ENCODE measurements at regions of chr6 and their contacts with region 1.

Region 1: GRCh38 chr6:157527471-157527907 is 146.5 kb downstream of the ZDHHC14 start:
- DNase-seq: peak; percentile 48
- ATAC-seq: peak; percentile 93
- H3K4me3 ChIP-seq: no peak overlapping the region
- H3K27ac ChIP-seq: no peak overlapping the region
- H3K4me1 ChIP-seq: no peaks in the 10 kb centered on the region
- H3K27me3 ChIP-seq: no peaks in the 10 kb centered on the region
- CTCF ChIP-seq: peak in 1 of 3 experiments; percentile 23; a peak in 1 of 6 replicates
- EP300 ChIP-seq: peak; percentile 49 to 67; a peak in 3 of 4 replicates
- POLR2A ChIP-seq: no peak
- RAD21 ChIP-seq: no peak

Region 2: GRCh38 chr6:157514659-157515496 is 12.6 kb before region 1 on chr6:
- CTCF ChIA-PET with region 1: no interaction called
- POLR2A ChIA-PET with region 1: interaction called, 4 read pairs
- RAD21 ChIA-PET with region 1: no interaction called
- SMC1A ChIA-PET with region 1: interaction called, 12 read pairs
- in situ Hi-C with region 1: no loop called
- intact Hi-C with region 1: no loop called
- DNase-seq: no peak
- ATAC-seq: no peak; the same call in 2 of the 3 replicates
- H3K4me3 ChIP-seq: no peak overlapping the region
- H3K27ac ChIP-seq: no peak overlapping the region
- H3K4me1 ChIP-seq: no peaks in the 10 kb centered on the region
- H3K27me3 ChIP-seq: no peaks in the 10 kb centered on the region
- CTCF ChIP-seq: no peak
- EP300 ChIP-seq: no peak
- POLR2A ChIP-seq: no peak
- RAD21 ChIP-seq: no peak

Region 3: DNA sequence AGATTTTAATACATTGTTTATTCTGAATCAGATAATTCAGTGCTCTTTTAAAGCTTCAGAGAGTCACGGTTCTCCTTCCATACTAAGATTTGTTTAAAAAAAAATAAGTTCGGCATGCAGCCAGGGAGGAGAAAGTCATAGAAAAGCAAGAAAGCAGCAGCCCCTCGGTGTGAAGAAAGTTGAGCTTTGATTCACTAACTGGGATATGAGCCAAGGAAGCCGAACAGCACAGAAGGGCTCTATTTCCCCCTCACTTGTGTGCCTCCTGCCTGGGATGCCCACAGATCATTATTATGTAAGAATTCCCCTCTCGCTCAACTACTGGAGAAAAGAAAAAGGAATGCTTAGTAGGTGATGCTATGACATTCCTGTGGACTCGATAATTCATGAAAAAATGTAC is 384.8 kb after region 1 on chr6:
- CTCF ChIA-PET with region 1: no interaction called
- POLR2A ChIA-PET with region 1: no interaction called
- RAD21 ChIA-PET with region 1: no interaction called
- SMC1A ChIA-PET with region 1: no interaction called
- in situ Hi-C with region 1: no loop called
- intact Hi-C with region 1: no loop called
- DNase-seq: no peak
- ATAC-seq: no peak
- H3K4me3 ChIP-seq: no peak overlapping the region
- H3K27ac ChIP-seq: no peak overlapping the region
- H3K4me1 ChIP-seq: peaks cover 17% of the 10 kb centered on the region
- H3K27me3 ChIP-seq: no peaks in the 10 kb centered on the region
- CTCF ChIP-seq: no peak
- EP300 ChIP-seq: no peak
- POLR2A ChIP-seq: no peak
- RAD21 ChIP-seq: no peak

Measured in GM12878 (cell line).